HepG2 (cell line): ENCODE measurements at regions of chr1 and their contacts with region 1.

Region 1: GRCh38 chr1:170692866-170693575 is 29.1 kb downstream of the PRRX1 start:
- DNase-seq: no peak
- ATAC-seq: no peak
- H3K4me3 ChIP-seq: no peak overlapping the region
- H3K27ac ChIP-seq: no peak overlapping the region
- H3K4me1 ChIP-seq: no peaks in the 10 kb centered on the region
- H3K27me3 ChIP-seq: no peaks in the 10 kb centered on the region
- CTCF ChIP-seq: no peak
- EP300 ChIP-seq: no peak
- POLR2A ChIP-seq: no peak
- RAD21 ChIP-seq: no peak

Region 2: GRCh38 chr1:170657275-170657853 is 35.7 kb before region 1 on chr1:
- CTCF ChIA-PET with region 1: no interaction called
- POLR2A ChIA-PET with region 1: no interaction called
- in situ Hi-C with region 1: no loop called
- intact Hi-C with region 1: no loop called
- DNase-seq: no peak
- ATAC-seq: no peak
- H3K4me3 ChIP-seq: no peak overlapping the region
- H3K27ac ChIP-seq: no peak overlapping the region
- H3K4me1 ChIP-seq: no peaks in the 10 kb centered on the region
- H3K27me3 ChIP-seq: peaks cover 0 to 18% of the 10 kb centered on the region in 2 experiments; a peak in 2 of 5 replicates
- CTCF ChIP-seq: no peak
- EP300 ChIP-seq: no peak
- POLR2A ChIP-seq: no peak
- RAD21 ChIP-seq: no peak

Region 3: GRCh38 chr1:170881268-170882265 is 188.5 kb after region 1 on chr1:
- CTCF ChIA-PET with region 1: no interaction called
- POLR2A ChIA-PET with region 1: no interaction called
- in situ Hi-C with region 1: no loop called
- intact Hi-C with region 1: loop called (anchors 1 kb)
- DNase-seq: no peak
- ATAC-seq: peak; percentile 43; the same call in 1 of the 3 replicates
- H3K4me3 ChIP-seq: no peak overlapping the region
- H3K27ac ChIP-seq: no peak overlapping the region
- H3K4me1 ChIP-seq: no peaks in the 10 kb centered on the region
- H3K27me3 ChIP-seq: no peaks in the 10 kb centered on the region
- CTCF ChIP-seq: peak; percentile 63
- EP300 ChIP-seq: no peak
- POLR2A ChIP-seq: no peak
- RAD21 ChIP-seq: no peak

Region 4: DNA sequence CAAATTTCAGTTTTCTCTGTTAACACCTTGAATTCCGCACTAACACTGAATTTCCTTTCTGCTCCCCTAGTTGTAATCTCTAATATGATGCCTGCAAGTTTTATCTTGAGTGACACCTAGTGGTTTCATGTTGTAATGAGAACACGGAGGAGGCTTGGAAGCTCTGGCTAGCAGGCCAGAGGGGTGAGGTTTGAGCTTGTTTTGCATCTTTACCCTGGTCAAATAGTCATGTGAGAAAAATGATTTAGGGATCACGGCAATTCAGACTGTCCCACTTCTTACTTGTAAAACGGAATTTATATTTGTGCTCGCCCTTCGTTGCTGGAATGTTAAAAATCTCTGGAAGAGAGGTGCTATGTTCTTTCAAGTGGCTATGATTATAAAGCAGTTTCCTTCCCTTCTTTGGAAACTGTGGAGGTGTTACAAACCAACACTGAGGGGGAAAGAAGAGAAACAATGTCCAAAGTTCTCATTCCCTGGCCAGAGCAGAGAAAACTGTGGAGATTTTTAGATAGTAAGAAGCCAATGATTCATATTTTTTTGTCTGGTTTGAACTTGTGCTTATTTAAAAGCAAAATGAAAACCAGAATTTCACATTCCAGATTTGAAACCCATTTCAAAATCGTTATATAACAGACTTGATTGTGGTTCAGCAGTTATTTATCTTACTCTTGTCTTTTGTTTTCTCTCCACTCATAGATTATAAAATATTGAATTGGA is 237.0 kb after region 1 on chr1:
- CTCF ChIA-PET with region 1: interaction called, 5 read pairs
- POLR2A ChIA-PET with region 1: no interaction called
- in situ Hi-C with region 1: no loop called
- intact Hi-C with region 1: loop called (anchors 1 kb)
- DNase-seq: peak; percentile 44
- ATAC-seq: peak; percentile 93
- H3K4me3 ChIP-seq: no peak overlapping the region
- H3K27ac ChIP-seq: no peak overlapping the region
- H3K4me1 ChIP-seq: no peaks in the 10 kb centered on the region
- H3K27me3 ChIP-seq: no peaks in the 10 kb centered on the region
- CTCF ChIP-seq: peak; percentile 77
- EP300 ChIP-seq: no peak
- POLR2A ChIP-seq: no peak
- RAD21 ChIP-seq: no peak

Region 5: DNA sequence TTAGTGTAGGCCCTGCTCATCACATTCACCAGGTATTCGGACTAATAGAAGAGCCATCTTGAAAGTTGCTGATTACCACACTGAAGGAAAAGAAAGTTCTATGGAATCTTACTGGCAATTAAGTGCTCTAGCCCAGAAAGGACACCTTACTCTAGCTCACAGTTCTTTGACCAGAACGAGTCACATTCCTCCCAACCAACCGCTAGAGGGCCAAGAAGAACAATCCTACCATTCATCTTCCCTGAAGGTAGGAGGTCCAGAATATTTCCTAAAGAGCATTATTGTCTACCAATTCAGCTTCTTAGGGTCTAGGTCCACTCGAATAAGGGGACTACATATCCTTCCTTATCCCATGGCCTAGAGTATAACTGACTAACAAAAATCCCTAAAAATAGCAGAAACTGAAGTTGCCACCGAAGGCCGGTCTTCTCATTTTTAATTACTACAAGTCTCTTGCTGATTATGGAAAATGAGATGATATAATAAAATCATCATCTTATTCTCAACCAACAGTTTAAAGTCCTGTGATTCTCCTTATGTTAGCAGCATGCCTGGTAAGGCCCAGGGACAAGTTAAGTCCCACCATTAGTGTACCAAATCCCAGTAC is 552.5 kb after region 1 on chr1:
- CTCF ChIA-PET with region 1: no interaction called
- POLR2A ChIA-PET with region 1: no interaction called
- in situ Hi-C with region 1: no loop called
- intact Hi-C with region 1: no loop called
- DNase-seq: peak; percentile 25
- ATAC-seq: peak; percentile 92
- H3K4me3 ChIP-seq: no peak overlapping the region
- H3K27ac ChIP-seq: no peak overlapping the region
- H3K4me1 ChIP-seq: no peaks in the 10 kb centered on the region
- H3K27me3 ChIP-seq: peaks cover 0 to 8% of the 10 kb centered on the region in 2 experiments; a peak in 2 of 5 replicates
- CTCF ChIP-seq: peak; percentile 71
- EP300 ChIP-seq: no peak
- POLR2A ChIP-seq: no peak
- RAD21 ChIP-seq: no peak